ENCODE measurements at regions of chrX and their contacts with region 1.

Region 1: DNA sequence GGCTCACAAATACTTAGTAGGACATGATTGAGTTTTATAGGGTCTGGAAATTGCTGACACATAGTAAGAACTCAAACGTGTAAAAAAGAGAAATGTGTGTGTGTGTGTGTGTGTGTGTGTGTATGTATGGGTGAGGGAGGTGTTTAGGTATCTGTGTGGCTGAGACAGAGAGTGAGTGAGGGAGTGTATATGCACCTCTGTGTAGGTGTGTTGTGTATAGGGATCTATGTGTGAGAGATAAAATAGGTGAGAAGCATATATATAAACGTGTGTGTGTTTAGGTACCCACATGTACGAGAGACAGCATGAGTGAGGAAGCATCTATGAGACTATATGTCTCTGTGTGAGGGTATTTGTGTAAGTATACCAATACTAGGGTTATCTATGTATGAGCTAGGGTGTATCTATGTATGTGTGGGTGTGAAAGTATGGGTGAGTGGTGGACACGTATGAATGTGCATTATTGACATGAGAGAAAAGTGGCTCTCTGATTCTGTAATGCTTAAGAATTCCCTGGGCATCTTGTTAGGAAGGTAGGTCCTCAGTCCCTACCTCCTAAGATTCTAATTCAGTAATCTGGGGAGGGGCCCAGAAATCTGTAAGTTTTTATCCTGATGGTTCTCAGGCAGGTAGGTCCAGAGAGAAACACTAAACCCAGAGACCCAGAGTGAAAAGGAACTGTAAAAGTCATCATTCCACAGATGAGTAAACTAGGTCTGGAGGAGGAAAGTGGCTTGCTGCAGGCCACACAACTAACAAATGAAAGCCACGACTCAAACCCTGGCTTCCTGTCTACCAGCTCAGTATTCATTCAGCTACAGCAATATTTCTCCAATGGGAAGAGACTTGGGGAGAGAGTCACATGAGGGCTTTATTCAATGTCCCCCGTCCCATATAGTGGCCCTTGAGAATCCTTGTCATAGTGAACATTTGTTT is 237.0 kb downstream of the IDS start:
- DNase-seq: no peak
- H3K4me3 ChIP-seq: no peak overlapping the region
- H3K27ac ChIP-seq: no peak overlapping the region
- H3K4me1 ChIP-seq: no peaks in the 10 kb centered on the region
- H3K27me3 ChIP-seq: no peaks in the 10 kb centered on the region
- CTCF ChIP-seq: no peak
- EP300 ChIP-seq: no peak
- RAD21 ChIP-seq: no peak

Region 2: DNA sequence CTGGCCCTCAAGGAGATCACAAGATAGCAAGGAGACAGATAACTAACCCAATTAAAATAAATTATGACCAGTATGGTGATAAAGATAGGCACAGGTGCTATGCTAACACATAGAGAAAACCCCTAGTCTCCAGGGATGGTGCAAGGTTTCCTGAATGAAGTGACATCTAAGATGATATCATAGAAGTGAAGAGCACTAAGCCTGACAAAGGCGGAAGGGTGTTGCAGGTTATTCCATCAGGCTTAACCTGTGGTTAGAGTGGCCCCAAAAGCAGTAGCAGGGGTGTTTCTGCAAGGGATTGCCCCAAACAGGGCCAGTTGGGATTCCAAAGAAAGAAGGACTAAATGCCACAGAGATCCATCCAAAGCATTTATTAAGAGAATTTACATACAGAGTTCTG is 12.3 kb before region 1 on chrX:
- CTCF ChIA-PET with region 1: no interaction called
- POLR2A ChIA-PET with region 1: no interaction called
- DNase-seq: no peak
- H3K4me3 ChIP-seq: no peak overlapping the region
- H3K27ac ChIP-seq: no peak overlapping the region
- H3K4me1 ChIP-seq: no peaks in the 10 kb centered on the region
- H3K27me3 ChIP-seq: no peaks in the 10 kb centered on the region
- CTCF ChIP-seq: no peak
- EP300 ChIP-seq: no peak
- RAD21 ChIP-seq: no peak

Region 3: DNA sequence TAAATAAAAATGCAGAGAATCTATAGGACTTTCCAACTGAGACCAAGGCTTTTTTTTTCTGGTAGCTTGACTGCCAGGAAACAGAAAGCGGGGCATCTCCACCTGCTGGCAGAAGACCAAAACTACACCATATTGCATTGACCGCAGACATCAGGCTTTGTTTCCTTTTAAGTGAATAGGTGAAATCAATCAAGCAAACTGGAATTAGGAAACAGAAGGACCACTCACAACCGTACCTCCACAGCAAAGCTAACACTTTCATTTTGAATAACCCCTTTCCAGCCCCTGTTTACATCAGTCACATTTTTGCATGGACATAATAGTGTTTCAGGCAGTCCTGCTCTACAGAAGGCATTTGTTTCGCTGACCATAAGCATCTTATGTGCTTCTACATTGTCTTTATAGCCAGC is 18.8 kb after region 1 on chrX:
- CTCF ChIA-PET with region 1: interaction called, 12 read pairs
- POLR2A ChIA-PET with region 1: no interaction called
- DNase-seq: peak; percentile 33
- H3K4me3 ChIP-seq: no peak overlapping the region
- H3K27ac ChIP-seq: no peak overlapping the region
- H3K4me1 ChIP-seq: no peaks in the 10 kb centered on the region
- H3K27me3 ChIP-seq: no peaks in the 10 kb centered on the region
- CTCF ChIP-seq: peak; percentile 75
- EP300 ChIP-seq: no peak
- RAD21 ChIP-seq: peak; percentile 66